ENCODE measurements at regions of chr11 and their contacts with region 1.

Region 1: DNA sequence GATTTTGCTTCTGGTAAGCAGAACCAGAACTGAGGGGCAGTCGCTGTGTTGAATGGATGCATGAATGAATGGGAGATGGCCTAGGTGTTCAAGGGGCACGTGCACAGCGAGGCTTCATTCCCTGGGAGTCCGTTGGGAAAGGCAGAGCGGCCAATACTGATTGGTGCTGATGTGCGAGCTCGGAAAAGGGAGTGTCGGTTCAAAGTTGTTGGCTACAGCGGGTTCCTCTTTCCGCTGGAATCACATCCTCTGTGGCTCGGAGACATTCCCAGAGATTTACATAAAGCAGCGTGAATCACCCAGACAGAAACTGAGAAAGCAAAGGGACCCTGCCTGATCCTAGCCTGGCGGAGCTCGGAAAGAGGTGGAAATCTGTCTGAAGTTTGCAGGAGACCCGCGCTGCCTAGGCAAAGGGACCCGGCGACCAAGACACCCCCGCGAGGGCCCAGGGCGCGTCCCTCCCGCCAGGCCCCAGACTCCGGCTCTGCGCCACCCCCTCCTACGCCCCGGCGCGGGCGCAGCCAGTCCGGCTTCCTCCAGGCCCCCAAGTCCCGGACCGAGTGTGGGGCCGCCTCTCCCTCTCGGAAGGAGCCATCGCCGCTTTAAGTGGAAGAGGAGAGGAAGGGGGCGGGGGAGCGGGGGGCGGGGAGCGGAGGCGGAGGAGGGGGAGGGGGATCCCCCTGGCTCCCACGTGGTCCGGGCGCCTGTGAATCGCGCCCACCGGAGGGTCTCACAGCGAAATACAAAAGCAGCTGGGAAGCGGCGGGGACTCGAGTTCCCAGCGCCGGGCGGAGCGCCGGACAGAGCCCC is at the start of gene FJX1:
- DNase-seq: peak; percentile 78
- H3K4me3 ChIP-seq: peak within 1 kb of the TSS; percentile 32 to 80 (median 62)
- H3K27ac ChIP-seq: peak within 1 kb of the TSS; percentile 27 to 82 (median 77)
- H3K4me1 ChIP-seq: peaks cover 9 to 63% (median 37%) of the 10 kb centered on the region in 6 donors
- H3K27me3 ChIP-seq: peaks cover 0 to 91% (median 44%) of the 10 kb centered on the region in 7 donors
- CTCF ChIP-seq: no peak
- POLR2A ChIP-seq: no peak
- total RNA-seq, gene FJX1: 7.5 to 40.6 (median 10.4) TPM

Region 2: GRCh38 chr11:35822815-35823495 is 205.1 kb after region 1 on chr11:
- intact Hi-C with region 1: loop called (anchors 10 kb)
- DNase-seq: no peak
- H3K4me3 ChIP-seq: no peak overlapping the region
- H3K27ac ChIP-seq: no peak overlapping the region
- H3K4me1 ChIP-seq: peaks cover 5 to 32% (median 21%) of the 10 kb centered on the region in 6 donors
- H3K27me3 ChIP-seq: no peaks in the 10 kb centered on the region
- CTCF ChIP-seq: no peak
- POLR2A ChIP-seq: no peak

Region 3: DNA sequence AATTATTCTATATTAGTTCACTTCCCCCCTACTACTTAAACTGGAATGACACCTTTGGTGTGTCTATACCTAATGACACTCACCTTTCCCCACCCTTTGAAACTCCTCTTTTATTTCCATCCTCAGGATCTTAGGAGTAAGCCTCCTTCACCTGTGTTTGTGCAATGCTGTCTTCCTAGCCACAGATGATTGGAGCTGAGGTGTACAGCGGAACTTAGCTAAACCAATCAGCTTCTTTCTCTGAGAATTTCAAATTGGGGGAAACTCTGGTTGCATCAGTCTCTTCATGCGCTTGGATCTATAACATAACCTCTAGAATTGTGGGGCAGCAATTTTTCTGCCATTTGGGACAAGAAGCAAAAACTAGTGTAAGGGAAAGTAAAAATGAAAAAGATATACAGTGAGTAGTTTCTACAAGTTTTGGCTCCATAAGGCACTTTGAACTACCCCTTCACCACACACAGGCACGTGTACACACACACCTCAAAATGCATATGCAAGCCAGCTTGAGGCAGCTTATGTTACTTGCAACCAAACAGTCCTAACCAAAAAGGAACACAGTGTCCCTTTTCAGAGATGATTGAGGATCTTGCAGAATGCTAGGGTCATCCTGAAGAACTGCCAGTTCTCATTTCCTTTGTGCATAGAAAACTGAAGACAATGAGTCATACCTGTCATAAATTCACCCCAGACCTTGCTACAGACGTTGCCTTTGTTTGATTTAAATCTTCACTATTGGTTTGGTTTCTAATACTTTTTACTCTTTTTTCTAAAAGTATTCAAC is 289.9 kb after region 1 on chr11:
- intact Hi-C with region 1: no loop called
- DNase-seq: no peak
- H3K4me3 ChIP-seq: no peak overlapping the region
- H3K27ac ChIP-seq: peak overlapping the region in 2 of 8 donors; percentile 51 to 55
- H3K4me1 ChIP-seq: peaks cover 0 to 22% (median 2%) of the 10 kb centered on the region in 6 donors
- H3K27me3 ChIP-seq: peaks cover 0 to 4% (median 0%) of the 10 kb centered on the region in 7 donors
- CTCF ChIP-seq: no peak
- POLR2A ChIP-seq: no peak

Region 4: GRCh38 chr11:36123346-36124101 is 505.6 kb after region 1 on chr11:
- intact Hi-C with region 1: loop called (anchors 10 kb)
- DNase-seq: no peak
- H3K4me3 ChIP-seq: no peak overlapping the region
- H3K27ac ChIP-seq: no peak overlapping the region
- H3K4me1 ChIP-seq: no peaks in the 10 kb centered on the region
- H3K27me3 ChIP-seq: peaks cover 0 to 10% (median 0%) of the 10 kb centered on the region in 7 donors
- CTCF ChIP-seq: no peak
- POLR2A ChIP-seq: no peak

Region 5: DNA sequence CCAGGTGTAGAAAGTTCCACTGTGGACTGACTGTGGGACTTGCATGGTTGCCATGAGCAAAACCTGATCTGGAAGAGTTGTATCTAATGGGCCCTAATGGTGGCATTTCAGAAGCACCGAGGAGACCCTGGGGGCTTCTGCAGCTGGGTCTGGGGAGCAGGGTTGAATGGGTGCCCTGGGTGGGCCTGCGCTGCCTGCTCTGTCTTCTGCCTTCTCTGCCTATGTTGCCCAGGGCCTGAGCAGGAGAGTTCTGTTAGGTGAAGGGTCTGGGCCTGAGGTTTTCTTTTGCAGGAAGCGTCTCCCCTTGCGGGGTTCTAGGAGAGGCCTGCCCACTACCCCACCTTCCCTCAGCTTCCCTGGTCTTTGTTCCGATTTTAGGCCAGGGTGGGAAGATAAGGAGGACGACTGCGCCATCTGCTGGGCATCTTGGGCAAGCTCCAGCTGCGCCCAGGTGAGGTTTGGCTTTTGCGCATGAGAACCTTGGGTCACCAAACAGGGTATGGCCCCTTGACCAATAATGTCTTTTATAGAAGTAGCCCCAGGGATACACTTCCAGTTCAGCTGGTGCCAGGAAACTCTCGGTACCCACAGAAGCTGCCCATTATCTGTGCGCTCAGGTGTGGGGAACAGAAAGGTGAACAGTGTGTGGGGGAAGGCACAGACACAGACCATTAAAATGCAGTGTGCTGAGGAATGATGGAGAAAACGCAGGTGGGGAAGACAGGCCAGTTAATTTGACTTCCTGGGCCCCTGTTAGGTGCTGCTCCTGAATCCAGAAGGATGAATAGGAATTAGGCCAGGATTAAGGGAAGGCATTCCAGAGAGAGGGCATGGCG is 648.1 kb after region 1 on chr11:
- intact Hi-C with region 1: loop called (anchors 5 kb)
- DNase-seq: peak; percentile 85
- H3K4me3 ChIP-seq: no peak overlapping the region
- H3K27ac ChIP-seq: no peak overlapping the region
- H3K4me1 ChIP-seq: peaks cover 0 to 6% (median 2%) of the 10 kb centered on the region in 6 donors
- H3K27me3 ChIP-seq: peaks cover 0 to 4% (median 0%) of the 10 kb centered on the region in 7 donors
- CTCF ChIP-seq: peak; percentile 61 to 89 (median 81)
- POLR2A ChIP-seq: no peak